ENCODE measurements at regions of chr1 and their contacts with region 1.

Region 1: GRCh38 chr1:89358287-89358893 is 5.5 kb upstream of the GBP6 start:
- DNase-seq: peak; percentile 81
- H3K4me3 Mint-ChIP-seq: no peak overlapping the region
- H3K27ac Mint-ChIP-seq: no peak overlapping the region
- H3K4me1 Mint-ChIP-seq: peaks cover 10% of the 10 kb centered on the region
- H3K27me3 Mint-ChIP-seq: no peaks in the 10 kb centered on the region
- CTCF ChIP-seq: peak; percentile 60

Region 2: GRCh38 chr1:88973520-88974137 is 384.8 kb before region 1 on chr1:
- CTCF ChIA-PET with region 1: interaction called, 18 read pairs
- POLR2A ChIA-PET with region 1: no interaction called
- intact Hi-C with region 1: loop called (anchors 1 kb)
- DNase-seq: peak; percentile 53
- H3K4me3 Mint-ChIP-seq: no peak overlapping the region
- H3K27ac Mint-ChIP-seq: no peak overlapping the region
- H3K4me1 Mint-ChIP-seq: peaks cover 10% of the 10 kb centered on the region
- H3K27me3 Mint-ChIP-seq: no peaks in the 10 kb centered on the region
- CTCF ChIP-seq: peak; percentile 57

Region 3: GRCh38 chr1:89085781-89086180 is 272.6 kb before region 1 on chr1:
- CTCF ChIA-PET with region 1: interaction called, 38 read pairs
- POLR2A ChIA-PET with region 1: no interaction called
- intact Hi-C with region 1: loop called (anchors 1 kb)
- DNase-seq: peak; percentile 73
- H3K4me3 Mint-ChIP-seq: no peak overlapping the region
- H3K27ac Mint-ChIP-seq: no peak overlapping the region
- H3K4me1 Mint-ChIP-seq: no peaks in the 10 kb centered on the region
- H3K27me3 Mint-ChIP-seq: no peaks in the 10 kb centered on the region
- CTCF ChIP-seq: peak; percentile 65

Region 4: GRCh38 chr1:89347296-89347695 is 11.1 kb before region 1 on chr1:
- CTCF ChIA-PET with region 1: interaction called, 17 read pairs
- POLR2A ChIA-PET with region 1: no interaction called
- intact Hi-C with region 1: no loop called
- DNase-seq: no peak
- H3K4me3 Mint-ChIP-seq: no peak overlapping the region
- H3K27ac Mint-ChIP-seq: no peak overlapping the region
- H3K4me1 Mint-ChIP-seq: no peaks in the 10 kb centered on the region
- H3K27me3 Mint-ChIP-seq: no peaks in the 10 kb centered on the region
- CTCF ChIP-seq: no peak

Region 5: DNA sequence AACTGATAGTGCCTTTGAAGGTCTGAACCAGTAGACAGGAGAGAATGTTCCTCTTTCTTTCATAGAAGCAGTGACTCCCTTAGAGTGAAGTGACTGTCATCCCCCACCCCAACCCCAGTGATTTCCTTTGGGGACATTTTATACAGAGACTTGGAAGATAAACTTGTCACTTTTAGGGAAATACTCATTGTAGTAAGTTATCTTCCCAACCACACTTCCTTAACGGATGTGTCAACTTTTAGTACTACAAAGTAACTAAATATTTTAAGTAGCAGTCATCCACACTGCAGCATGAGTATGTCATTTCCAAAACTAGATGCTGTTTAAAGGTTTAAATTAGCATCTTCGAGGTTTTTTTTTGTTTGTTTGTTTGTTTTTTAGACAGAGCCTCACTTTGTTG is 180.0 kb after region 1 on chr1:
- CTCF ChIA-PET with region 1: no interaction called
- POLR2A ChIA-PET with region 1: no interaction called
- intact Hi-C with region 1: no loop called
- DNase-seq: no peak
- H3K4me3 Mint-ChIP-seq: no peak overlapping the region
- H3K27ac Mint-ChIP-seq: no peak overlapping the region
- H3K4me1 Mint-ChIP-seq: no peaks in the 10 kb centered on the region
- H3K27me3 Mint-ChIP-seq: no peaks in the 10 kb centered on the region
- CTCF ChIP-seq: no peak